Colonic mucosa (tissue), 4 donors: ENCODE measurements at regions of chr2 and their contacts with region 1.

Region 1: DNA sequence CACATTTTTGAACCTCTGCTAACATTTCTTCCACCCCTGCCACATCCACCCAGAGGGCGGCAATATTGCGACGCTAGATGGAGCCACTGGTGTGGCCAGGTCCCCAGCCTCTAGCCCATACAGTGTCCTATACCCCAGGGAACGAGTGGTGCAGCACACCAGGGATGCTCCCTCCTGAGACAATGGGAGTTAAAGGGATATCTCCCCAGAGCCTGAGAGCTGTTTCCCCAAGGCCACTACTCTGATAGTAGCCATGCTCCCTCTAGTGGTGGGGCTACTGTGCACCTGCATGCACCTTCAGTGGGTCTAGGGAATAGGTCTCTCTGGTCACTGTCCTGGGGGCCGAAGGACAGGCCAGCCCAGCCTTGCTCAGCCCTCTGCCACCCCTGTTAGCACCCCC is 336.4 kb upstream of the FSHR start:
- DNase-seq: peak; percentile 28
- H3K4me3 ChIP-seq: no peak overlapping the region
- H3K27ac ChIP-seq: no peak overlapping the region
- H3K4me1 ChIP-seq: no peaks in the 10 kb centered on the region
- H3K27me3 ChIP-seq: no peaks in the 10 kb centered on the region
- CTCF ChIP-seq: peak; percentile 64

Region 2: DNA sequence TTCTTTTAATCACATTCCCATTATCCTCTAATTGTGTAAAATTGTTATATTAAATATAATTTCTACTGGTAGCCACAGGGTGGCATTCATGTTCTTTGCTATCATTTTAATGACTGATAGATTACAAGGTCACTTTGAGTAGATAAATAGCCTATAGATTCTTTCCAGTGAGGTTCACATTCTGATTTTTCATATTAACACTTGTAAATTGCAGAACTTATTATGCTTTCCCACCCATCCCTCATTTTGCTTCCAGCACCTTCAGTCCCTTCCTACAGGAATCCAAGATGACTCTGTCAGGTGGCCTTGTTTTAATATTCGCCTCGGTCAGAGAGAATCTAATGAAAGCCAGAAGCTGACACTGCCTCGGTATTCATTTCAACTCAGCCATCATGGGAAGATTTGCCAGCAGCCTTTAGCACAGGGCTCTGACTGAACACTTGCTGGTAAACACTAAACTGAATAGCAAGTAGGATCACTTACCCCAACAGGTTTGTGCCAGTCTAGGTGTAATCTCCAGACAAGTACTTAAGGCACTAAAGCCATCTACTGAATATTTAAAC is 235.2 kb before region 1 on chr2:
- intact Hi-C with region 1: loop called (anchors 2 kb)
- DNase-seq: no peak
- H3K4me3 ChIP-seq: no peak overlapping the region
- H3K27ac ChIP-seq: no peak overlapping the region
- H3K4me1 ChIP-seq: no peaks in the 10 kb centered on the region
- H3K27me3 ChIP-seq: no peaks in the 10 kb centered on the region
- CTCF ChIP-seq: no peak